HEK293 (cell line): ENCODE measurements at regions of chr19 and their contacts with region 1.

Region 1: DNA sequence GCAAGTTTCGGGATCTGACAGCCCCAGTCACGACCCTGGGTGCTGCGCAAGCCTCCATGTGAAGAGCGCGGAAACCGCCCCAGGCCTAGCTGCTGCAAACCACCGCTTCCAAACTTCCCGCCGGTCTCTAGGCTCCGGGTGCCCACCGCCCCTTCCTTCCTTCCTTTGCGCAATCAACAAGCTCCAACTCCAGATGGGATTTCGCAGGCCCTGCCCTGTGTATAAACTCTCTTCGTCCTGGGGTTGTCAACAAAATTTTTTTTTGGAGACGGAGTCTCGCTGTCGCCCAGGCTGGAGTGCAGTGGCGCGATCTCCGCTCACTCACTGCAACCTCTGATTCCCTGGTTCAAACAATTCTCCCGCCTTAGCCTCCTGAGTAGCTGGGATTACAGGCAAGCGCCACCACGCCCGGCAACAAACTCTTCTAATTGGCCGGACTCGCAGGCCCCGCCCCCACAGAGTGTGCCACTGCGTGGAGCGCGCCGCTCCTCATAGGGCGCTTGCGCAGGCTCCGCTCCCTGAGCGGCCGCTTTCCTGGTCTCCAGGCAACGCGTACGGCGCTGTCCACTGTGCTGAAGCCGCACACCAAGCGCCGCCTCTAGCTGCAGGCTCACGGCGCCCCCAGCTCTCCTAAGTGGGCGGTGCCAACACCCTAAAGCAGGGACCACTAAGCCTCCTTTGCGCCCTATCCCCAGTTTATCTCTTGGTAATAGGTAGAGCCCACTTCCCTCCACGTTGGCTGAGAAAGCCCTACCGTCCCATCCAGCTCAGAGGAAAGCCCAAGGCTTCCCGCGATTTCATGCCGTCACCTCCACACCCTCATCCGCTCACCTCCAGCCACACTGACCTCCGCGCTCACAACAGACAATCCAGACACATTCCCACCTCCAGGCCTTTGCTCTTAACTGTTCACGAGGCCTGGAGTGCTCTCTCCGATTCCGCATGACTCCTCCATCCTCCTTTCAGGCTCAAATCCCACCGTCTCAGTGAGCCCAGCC is 5.5 kb upstream of the QTRT1 start:
- H3K4me3 ChIP-seq: no peak overlapping the region; the same call in 1 of the 2 replicates
- H3K27ac ChIP-seq: no peak overlapping the region
- H3K4me1 ChIP-seq: peaks cover 3% of the 10 kb centered on the region; the same call in 1 of the 2 replicates
- CTCF ChIP-seq: peak; percentile 52; the same call in 1 of the 2 replicates

Region 2: GRCh38 chr19:10478903-10479384 is 216.8 kb before region 1 on chr19:
- CTCF ChIA-PET with region 1: interaction called, 28 read pairs
- POLR2A ChIA-PET with region 1: interaction called, 3 read pairs
- H3K4me3 ChIP-seq: no peak overlapping the region
- H3K27ac ChIP-seq: no peak overlapping the region
- H3K4me1 ChIP-seq: no peaks in the 10 kb centered on the region
- CTCF ChIP-seq: no peak

Region 3: GRCh38 chr19:10580979-10581631 is 114.6 kb before region 1 on chr19:
- CTCF ChIA-PET with region 1: interaction called, 165 read pairs
- POLR2A ChIA-PET with region 1: interaction called, 13 read pairs
- H3K4me3 ChIP-seq: no peak overlapping the region
- H3K27ac ChIP-seq: no peak overlapping the region
- H3K4me1 ChIP-seq: no peaks in the 10 kb centered on the region
- CTCF ChIP-seq: peak; percentile 94

Region 4: DNA sequence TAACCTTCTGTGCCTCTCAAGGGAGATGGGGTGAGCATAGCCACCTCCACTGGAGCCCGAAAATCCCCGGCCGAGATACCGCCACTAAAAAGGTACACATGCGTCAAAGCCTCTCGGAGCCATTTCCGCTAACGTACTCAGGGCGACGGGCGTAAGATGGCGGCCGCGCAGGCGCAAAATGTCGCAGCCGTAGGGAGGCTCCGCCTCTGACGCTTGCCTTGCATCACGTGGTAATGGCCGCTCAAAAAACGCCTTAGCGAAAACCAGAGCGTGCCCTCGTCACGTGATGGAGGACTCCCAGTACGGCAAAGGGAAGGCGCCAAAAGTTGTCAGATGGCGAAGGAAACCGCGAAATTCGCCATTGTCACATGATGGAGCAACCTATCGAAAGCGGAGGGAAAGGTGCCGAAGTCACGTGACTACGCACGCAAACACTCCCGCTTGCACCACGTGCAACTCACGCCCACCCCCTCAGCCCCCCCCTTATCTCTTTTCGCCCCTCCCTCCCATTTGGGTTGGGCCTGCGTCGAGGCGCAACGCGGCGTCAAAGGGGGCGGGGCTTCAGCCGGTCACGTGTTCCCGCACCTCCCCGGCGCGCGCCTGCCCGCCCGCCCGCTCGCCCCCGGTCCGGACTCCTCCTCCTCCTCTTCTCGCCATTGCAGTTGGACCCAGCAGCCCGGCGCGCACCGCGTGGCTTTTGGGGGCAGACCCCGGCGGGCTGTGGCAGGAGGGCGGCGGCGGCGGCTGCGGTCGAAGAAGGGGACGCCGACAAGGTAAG is 41.8 kb before region 1 on chr19 and contains the start of gene ILF3:
- CTCF ChIA-PET with region 1: interaction called, 23 read pairs
- POLR2A ChIA-PET with region 1: interaction called, 4 read pairs
- H3K4me3 ChIP-seq: peak within 1 kb of the TSS; percentile 61
- H3K27ac ChIP-seq: peak within 1 kb of the TSS; percentile 89
- H3K4me1 ChIP-seq: peaks cover 7% of the 10 kb centered on the region; the same call in 1 of the 2 replicates
- CTCF ChIP-seq: no peak

Region 5: GRCh38 chr19:10677751-10678150 is 17.9 kb before region 1 on chr19:
- CTCF ChIA-PET with region 1: interaction called, 15 read pairs
- POLR2A ChIA-PET with region 1: interaction called, 5 read pairs
- H3K4me3 ChIP-seq: no peak overlapping the region
- H3K27ac ChIP-seq: no peak overlapping the region
- H3K4me1 ChIP-seq: no peaks in the 10 kb centered on the region
- CTCF ChIP-seq: no peak

Region 6: DNA sequence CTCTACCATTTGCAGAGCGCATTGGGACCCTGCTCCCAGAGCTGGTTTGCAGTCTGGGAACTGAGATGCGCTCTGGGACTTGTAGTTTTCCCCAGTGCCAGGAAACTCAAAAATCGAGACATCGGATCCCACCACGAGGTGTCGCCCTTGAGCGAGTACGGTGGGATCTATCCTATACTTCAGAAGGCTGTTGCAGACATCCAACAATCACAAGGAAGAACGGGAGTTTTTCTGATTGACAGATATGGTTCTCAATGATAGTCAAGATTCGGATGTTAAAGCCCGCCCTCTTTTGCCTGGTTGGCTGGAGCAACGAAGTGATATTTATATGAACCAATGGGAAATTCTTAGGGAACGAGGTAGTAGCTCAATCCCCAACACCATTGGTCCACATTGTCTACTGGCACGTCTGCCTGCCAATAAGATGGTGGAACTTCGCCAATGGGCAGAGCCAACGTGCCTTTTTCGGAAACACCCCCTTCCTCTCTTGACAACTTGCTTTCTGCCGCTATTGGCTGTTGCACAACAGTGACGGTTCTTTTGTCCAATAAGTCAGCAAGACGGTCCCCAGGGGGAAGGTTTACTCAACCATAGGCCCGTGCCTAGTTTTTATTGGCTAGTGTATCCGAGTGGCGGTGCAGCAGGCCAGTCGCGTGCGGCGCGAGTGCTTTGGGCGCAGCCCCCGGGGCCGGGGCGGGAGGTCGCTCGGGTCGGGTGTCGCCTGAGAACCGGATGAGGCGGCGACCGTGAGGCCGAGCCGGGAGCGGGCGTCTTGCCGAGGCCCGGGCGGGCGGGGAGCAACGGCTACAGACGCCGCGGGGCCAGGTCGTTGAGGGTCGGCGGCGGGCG is 21.9 kb after region 1 on chr19 and contains the start of gene DNM2:
- CTCF ChIA-PET with region 1: interaction called, 13 read pairs
- POLR2A ChIA-PET with region 1: no interaction called
- H3K4me3 ChIP-seq: peak within 1 kb of the TSS; percentile 97
- H3K27ac ChIP-seq: peak within 1 kb of the TSS; percentile 78
- H3K4me1 ChIP-seq: no peaks in the 10 kb centered on the region
- CTCF ChIP-seq: peak; percentile 92